ENCODE measurements at regions of chr2 and their contacts with region 1.

Region 1: GRCh38 chr2:121649596-121650314 is 493 bp upstream of the CLASP1 start:
- DNase-seq: peak; percentile 94
- H3K4me3 Mint-ChIP-seq: peak overlapping the region; percentile 97
- H3K27ac Mint-ChIP-seq: peak overlapping the region; percentile 100
- H3K4me1 Mint-ChIP-seq: peaks cover 56% of the 10 kb centered on the region
- H3K27me3 Mint-ChIP-seq: no peaks in the 10 kb centered on the region

Region 2: GRCh38 chr2:121400201-121400600 is 249.6 kb before region 1 on chr2:
- intact Hi-C with region 1: loop called (anchors 5 kb)
- DNase-seq: no peak
- H3K4me3 Mint-ChIP-seq: no peak overlapping the region
- H3K27ac Mint-ChIP-seq: no peak overlapping the region
- H3K4me1 Mint-ChIP-seq: peaks cover 4% of the 10 kb centered on the region
- H3K27me3 Mint-ChIP-seq: no peaks in the 10 kb centered on the region

Region 3: GRCh38 chr2:121699421-121700333 is 49.9 kb after region 1 on chr2:
- intact Hi-C with region 1: loop called (anchors 1 kb)
- DNase-seq: peak; percentile 83
- H3K4me3 Mint-ChIP-seq: peak overlapping the region; percentile 85
- H3K27ac Mint-ChIP-seq: peak overlapping the region; percentile 95
- H3K4me1 Mint-ChIP-seq: peaks cover 48% of the 10 kb centered on the region
- H3K27me3 Mint-ChIP-seq: peaks cover 2% of the 10 kb centered on the region

Region 4: DNA sequence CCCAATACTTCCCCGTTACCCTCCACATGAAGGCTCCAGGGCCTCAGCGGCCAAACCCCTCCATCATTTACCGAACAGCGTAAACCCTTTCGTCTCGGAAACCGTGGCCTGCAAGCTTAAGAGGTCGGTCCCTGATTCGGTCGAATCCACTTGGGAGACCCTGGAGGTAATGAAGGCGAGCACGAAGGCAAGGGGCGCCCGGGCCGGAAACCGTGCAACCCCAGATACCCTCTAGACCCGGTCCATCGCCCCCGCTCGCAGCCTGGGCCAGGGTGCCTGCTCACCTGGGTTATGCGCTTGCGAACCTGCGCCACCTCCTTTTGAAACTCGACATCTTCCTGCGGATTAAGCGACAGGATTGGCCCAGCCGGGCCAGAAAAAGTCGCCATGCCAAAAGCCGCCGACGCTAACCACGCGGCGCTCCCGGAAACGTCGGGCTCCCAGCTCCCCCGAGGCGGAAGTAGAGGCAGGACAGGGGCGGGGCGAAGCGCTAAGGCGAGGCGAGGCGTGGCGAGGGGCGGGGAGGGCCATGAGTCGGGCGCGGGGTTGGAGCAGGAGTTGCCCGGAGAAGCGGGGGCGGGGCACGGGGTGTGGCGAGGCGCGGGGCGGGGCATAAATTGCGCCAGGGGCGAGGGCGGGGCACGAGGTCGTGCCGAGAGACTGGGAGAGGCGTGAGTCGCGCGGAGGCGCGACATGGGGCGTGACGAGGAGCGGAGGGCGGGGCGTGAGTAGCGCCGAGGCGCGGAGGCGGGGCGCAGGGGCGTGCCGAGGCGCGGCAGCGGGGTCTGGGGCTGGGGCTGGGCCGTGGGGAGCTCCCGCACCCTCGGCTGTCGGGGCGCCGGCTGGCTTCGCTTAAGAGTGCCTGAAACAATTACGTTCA is 86.9 kb after region 1 on chr2 and contains the start of gene NIFK:
- intact Hi-C with region 1: loop called (anchors 1 kb)
- DNase-seq: peak; percentile 99
- H3K4me3 Mint-ChIP-seq: peak within 1 kb of the TSS; percentile 89
- H3K27ac Mint-ChIP-seq: peak within 1 kb of the TSS; percentile 95
- H3K4me1 Mint-ChIP-seq: peaks cover 22% of the 10 kb centered on the region
- H3K27me3 Mint-ChIP-seq: no peaks in the 10 kb centered on the region
- total RNA-seq, gene NIFK: 150 TPM in 2 replicates

Measured in activated T-helper 1 cell treated with anti-CD3 and anti-CD28 coated beads, Interleukin-12 subunit alpha, Interleukin-12 subunit beta, Interleukin-2, Interleukin-4 antibody, amounts not matched to agents 30 ng/mL and 10 ng/mL and 1 ng/mL, durations not matched to agents 14 hours and 24 hours and 36 hours (primary cell).